Tibial artery (tissue), 4 donors: ENCODE measurements at regions of chr10 and their contacts with region 1.

Region 1: GRCh38 chr10:117496616-117497028 is 45.9 kb upstream of the EMX2 start:
- DNase-seq: peak; percentile 76 to 83
- H3K4me3 ChIP-seq: no peak overlapping the region
- H3K27ac ChIP-seq: no peak overlapping the region
- H3K4me1 ChIP-seq: peaks cover 0 to 4% (median 2%) of the 10 kb centered on the region in 4 donors
- H3K27me3 ChIP-seq: no peaks in the 10 kb centered on the region
- CTCF ChIP-seq: peak; percentile 96 to 97

Region 2: GRCh38 chr10:117518246-117518645 is 21.6 kb after region 1 on chr10:
- intact Hi-C with region 1: no loop called
- DNase-seq: no peak
- H3K4me3 ChIP-seq: no peak overlapping the region
- H3K27ac ChIP-seq: no peak overlapping the region
- H3K4me1 ChIP-seq: peaks cover 0 to 9% (median 0%) of the 10 kb centered on the region in 4 donors
- H3K27me3 ChIP-seq: no peaks in the 10 kb centered on the region
- CTCF ChIP-seq: no peak

Region 3: GRCh38 chr10:118246332-118247203 is 749.9 kb after region 1 on chr10:
- intact Hi-C with region 1: loop called (anchors 5 kb)
- DNase-seq: no peak
- H3K4me3 ChIP-seq: no peak overlapping the region
- H3K27ac ChIP-seq: no peak overlapping the region
- H3K4me1 ChIP-seq: no peaks in the 10 kb centered on the region
- H3K27me3 ChIP-seq: peaks cover 0 to 35% of the 10 kb centered on the region in 2 donors
- CTCF ChIP-seq: no peak

Region 4: GRCh38 chr10:118423800-118424479 is 927.3 kb after region 1 on chr10:
- intact Hi-C with region 1: loop called (anchors 10 kb)
- DNase-seq: peak; percentile 77 to 78
- H3K4me3 ChIP-seq: no peak overlapping the region
- H3K27ac ChIP-seq: no peak overlapping the region
- H3K4me1 ChIP-seq: no peaks in the 10 kb centered on the region
- H3K27me3 ChIP-seq: no peaks in the 10 kb centered on the region
- CTCF ChIP-seq: peak; percentile 59 to 68